K562 (cell line): ENCODE measurements at regions of chr1 and their contacts with region 1.

Region 1: DNA sequence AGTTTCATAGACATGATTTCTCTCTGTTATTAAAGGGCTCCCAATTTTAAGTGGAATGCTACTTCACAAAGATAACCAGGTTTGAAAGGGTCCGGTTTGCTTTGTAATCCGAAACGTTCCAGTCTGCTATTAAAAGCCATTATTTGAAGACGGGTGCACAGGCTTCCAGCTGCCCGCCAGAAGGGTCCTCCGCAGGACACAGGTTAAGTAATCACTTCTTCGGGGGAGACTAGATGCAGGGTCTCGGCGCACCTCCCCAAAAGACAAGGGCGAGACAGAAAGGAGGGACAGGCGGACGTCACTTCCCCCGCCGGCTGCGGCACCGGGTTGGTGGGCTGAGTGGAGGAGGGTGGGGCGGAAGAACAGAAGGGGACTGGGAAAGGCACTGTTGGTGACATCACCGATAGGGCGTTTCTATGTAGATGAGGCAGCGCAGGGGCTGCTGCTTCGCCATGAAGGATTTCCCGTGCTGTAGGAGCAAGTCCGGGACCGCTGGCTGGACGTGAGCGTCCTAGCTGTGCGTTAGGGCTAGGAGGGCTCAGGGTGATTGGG is 8.9 kb downstream of the RNU1-2 start:
- DNase-seq: peak; percentile 94 to 99 (median 95)
- ATAC-seq: peak; percentile 93
- H3K4me3 ChIP-seq: peak overlapping the region; percentile 36
- H3K27ac ChIP-seq: peak overlapping the region; percentile 99
- H3K4me1 ChIP-seq: peaks cover 13 to 19% of the 10 kb centered on the region in 2 experiments; a peak in 4 of 5 replicates
- H3K27me3 ChIP-seq: no peaks in the 10 kb centered on the region
- CTCF ChIP-seq: 0 out of 6 replicates have a peak, but pooled peaks of 1 of the 3 experiments have one; percentile 0
- EP300 ChIP-seq: no peak
- POLR2A ChIP-seq: no peak
- RAD21 ChIP-seq: no peak

Region 2: DNA sequence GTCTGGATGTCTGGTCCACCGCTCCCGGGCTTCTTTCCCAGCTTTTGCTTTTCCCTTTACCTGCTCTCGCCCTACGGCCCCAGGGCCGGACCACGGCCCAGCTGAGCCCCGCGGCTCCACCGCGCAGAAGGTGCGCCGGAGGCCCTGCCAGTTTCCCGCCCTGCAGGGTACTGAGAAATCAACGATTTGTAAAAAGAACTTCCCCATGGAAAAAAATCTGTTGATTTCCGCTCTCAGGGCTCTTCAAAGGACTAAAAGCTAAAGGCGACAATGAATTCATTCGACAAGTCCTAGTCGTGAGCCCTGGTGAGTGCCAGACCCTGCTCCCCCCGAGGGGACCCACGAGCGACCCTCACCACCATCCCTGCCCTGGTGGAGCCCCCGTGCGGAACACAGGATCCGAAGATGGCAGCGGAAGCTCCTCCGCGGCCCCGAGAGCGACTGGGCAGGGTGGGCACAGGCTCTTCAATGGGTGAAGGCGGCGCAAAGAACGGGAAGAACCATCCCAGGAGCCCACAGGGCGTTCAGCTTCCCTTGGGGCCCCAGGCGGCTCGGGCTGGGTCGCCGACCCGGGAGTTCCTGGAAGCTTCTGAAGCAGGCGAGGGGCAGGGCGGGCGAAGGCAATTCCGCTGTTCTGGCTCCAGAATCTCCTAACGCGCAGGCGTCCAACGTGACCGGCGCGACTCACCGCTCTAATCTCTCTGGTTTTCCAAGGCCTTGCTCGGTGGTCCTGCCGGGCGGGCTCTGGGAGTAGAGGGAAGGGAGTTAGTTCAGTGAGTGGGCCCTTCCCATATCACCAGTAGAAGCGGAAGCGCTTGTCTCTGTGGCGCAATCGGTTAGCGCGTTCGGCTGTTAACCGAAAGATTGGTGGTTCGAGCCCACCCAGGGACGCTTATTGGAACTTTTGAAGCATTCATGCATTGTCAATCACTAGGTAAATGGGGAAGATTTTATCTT is 15.5 kb before region 1 on chr1:
- CTCF ChIA-PET with region 1: no interaction called
- POLR2A ChIA-PET with region 1: interaction called, 31 read pairs
- in situ Hi-C with region 1: no loop called
- intact Hi-C with region 1: no loop called
- DNase-seq: no peak
- ATAC-seq: no peak
- H3K4me3 ChIP-seq: no peak overlapping the region
- H3K27ac ChIP-seq: no peak overlapping the region
- H3K4me1 ChIP-seq: peaks cover 9 to 15% of the 10 kb centered on the region in 2 experiments
- H3K27me3 ChIP-seq: 0 out of 5 replicates have a peak, but pooled peaks cover 0 to 5% of the 10 kb centered on the region in 2 experiments
- CTCF ChIP-seq: no peak
- EP300 ChIP-seq: no peak
- POLR2A ChIP-seq: no peak
- RAD21 ChIP-seq: no peak

Region 3: GRCh38 chr1:16921391-16922185 is 17.0 kb after region 1 on chr1 and contains the start of gene CROCC:
- CTCF ChIA-PET with region 1: no interaction called
- POLR2A ChIA-PET with region 1: interaction called, 32 read pairs
- in situ Hi-C with region 1: no loop called
- intact Hi-C with region 1: no loop called
- DNase-seq: peak in 2 of 4 experiments; percentile 23 to 42
- ATAC-seq: peak; percentile 78
- H3K4me3 ChIP-seq: no peak within 1 kb of the TSS
- H3K27ac ChIP-seq: no peak within 1 kb of the TSS
- H3K4me1 ChIP-seq: peaks cover 0 to 14% of the 10 kb centered on the region in 2 experiments; a peak in 3 of 5 replicates
- H3K27me3 ChIP-seq: peaks cover 8 to 13% of the 10 kb centered on the region in 2 experiments; a peak in 3 of 5 replicates
- CTCF ChIP-seq: no peak
- EP300 ChIP-seq: no peak
- POLR2A ChIP-seq: no peak
- RAD21 ChIP-seq: no peak
- polyA plus RNA-seq, gene CROCC: 0.17 TPM

Region 4: GRCh38 chr1:16967095-16967575 is 62.5 kb after region 1 on chr1:
- CTCF ChIA-PET with region 1: no interaction called
- POLR2A ChIA-PET with region 1: interaction called, 10 read pairs
- in situ Hi-C with region 1: no loop called
- intact Hi-C with region 1: no loop called
- DNase-seq: no peak
- ATAC-seq: no peak
- H3K4me3 ChIP-seq: no peak overlapping the region
- H3K27ac ChIP-seq: no peak overlapping the region
- H3K4me1 ChIP-seq: peaks cover 0 to 52% of the 10 kb centered on the region in 2 experiments; a peak in 2 of 5 replicates
- H3K27me3 ChIP-seq: peaks cover 30 to 67% of the 10 kb centered on the region in 2 experiments; a peak in 4 of 5 replicates
- CTCF ChIP-seq: no peak
- EP300 ChIP-seq: no peak
- POLR2A ChIP-seq: no peak
- RAD21 ChIP-seq: no peak

Region 5: DNA sequence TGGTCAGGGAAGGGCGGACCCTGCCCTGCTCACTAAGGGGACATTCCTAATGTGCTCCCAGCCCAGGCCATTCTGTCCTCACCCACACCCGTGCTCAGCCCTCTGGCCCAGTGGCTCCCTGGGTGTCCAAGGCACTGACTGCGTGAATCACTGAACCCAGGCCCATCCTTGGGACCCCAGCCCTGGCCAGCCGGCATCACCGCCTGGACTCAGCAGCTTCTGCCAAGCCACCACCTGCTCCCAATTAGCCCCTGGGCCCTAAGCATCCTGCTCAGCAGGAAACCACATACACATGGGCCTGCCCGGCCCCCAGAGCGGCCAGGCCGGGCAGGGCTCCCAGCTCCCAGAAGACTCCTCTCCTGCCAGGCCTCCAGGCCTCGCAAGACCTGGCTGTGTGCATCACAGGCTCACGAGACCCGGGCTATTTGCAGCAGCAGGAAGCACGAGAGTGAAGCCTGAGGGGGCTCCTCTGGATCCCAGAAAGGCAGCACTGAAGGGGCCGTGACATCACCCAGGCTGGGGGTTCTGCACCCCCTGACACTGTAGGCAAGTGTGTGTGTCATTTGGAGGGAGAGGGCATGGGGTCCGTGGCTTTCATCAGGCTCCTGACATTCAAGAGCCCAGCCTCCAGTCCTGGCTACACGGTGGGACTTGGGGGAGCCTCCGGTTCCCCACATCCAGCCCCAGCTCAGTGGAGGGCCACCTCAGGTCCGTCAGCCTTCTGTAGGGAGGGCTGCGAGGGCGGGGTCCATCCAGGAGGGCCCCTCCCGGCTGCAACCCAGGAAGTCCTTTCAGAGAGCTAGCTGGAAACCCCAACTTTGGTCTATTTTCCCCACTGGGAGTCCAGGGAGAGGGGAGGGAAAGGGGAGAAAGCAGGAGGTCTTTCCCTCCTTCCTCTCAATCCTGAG is 74.2 kb after region 1 on chr1:
- CTCF ChIA-PET with region 1: no interaction called
- POLR2A ChIA-PET with region 1: interaction called, 10 read pairs
- in situ Hi-C with region 1: no loop called
- intact Hi-C with region 1: no loop called
- DNase-seq: no peak
- ATAC-seq: no peak
- H3K4me3 ChIP-seq: no peak overlapping the region
- H3K27ac ChIP-seq: no peak overlapping the region
- H3K4me1 ChIP-seq: peaks cover 0 to 44% of the 10 kb centered on the region in 2 experiments; a peak in 2 of 5 replicates
- H3K27me3 ChIP-seq: peaks cover 17 to 25% of the 10 kb centered on the region in 2 experiments; a peak in 3 of 5 replicates
- CTCF ChIP-seq: no peak
- EP300 ChIP-seq: no peak
- POLR2A ChIP-seq: no peak
- RAD21 ChIP-seq: no peak

Region 6: DNA sequence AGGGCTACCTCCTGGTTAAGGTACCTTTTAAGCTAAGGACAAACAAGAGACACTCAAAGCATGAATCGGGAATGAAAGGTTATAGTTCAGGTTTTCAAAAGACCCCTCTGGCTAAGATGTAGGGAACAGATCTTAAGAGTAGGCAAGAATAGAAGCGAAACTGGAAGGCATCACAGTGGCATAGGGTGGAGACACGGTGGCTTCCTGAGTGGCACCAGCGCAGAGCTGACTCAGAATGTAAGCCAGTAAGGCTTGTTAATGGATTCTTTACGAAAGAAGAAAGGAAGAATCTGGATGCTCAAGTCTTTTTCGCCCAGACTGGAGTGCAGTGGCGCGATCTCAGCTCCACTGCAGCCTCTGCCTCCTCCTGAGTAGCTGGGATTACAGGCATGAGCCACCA is 488.6 kb after region 1 on chr1:
- CTCF ChIA-PET with region 1: no interaction called
- POLR2A ChIA-PET with region 1: no interaction called
- in situ Hi-C with region 1: no loop called
- intact Hi-C with region 1: no loop called
- DNase-seq: no peak
- ATAC-seq: no peak
- H3K4me3 ChIP-seq: no peak overlapping the region
- H3K27ac ChIP-seq: no peak overlapping the region
- H3K4me1 ChIP-seq: peaks cover 6 to 8% of the 10 kb centered on the region in 2 experiments; a peak in 4 of 5 replicates
- H3K27me3 ChIP-seq: peaks cover 53 to 65% of the 10 kb centered on the region in 2 experiments
- CTCF ChIP-seq: no peak
- EP300 ChIP-seq: no peak
- POLR2A ChIP-seq: no peak
- RAD21 ChIP-seq: no peak